Activated T-helper 2 cell treated with anti-CD3 and anti-CD28 coated beads, Interferon-gamma antibody, Interleukin-2, Interleukin-4, amounts not matched to agents 10 μg/mL and 5 μg/mL and 100 μg/mL, durations not matched to agents 14 hours and 24 hours and 36 hours (primary cell): ENCODE measurements at regions of chr1 and their contacts with region 1.

Region 1: GRCh38 chr1:68120136-68120791 is 69.8 kb upstream of the DIRAS3 start:
- DNase-seq: peak; percentile 12
- H3K4me3 Mint-ChIP-seq: no peak overlapping the region
- H3K27ac Mint-ChIP-seq: no peak overlapping the region
- H3K4me1 Mint-ChIP-seq: peaks cover 3% of the 10 kb centered on the region
- H3K27me3 Mint-ChIP-seq: no peaks in the 10 kb centered on the region

Region 2: DNA sequence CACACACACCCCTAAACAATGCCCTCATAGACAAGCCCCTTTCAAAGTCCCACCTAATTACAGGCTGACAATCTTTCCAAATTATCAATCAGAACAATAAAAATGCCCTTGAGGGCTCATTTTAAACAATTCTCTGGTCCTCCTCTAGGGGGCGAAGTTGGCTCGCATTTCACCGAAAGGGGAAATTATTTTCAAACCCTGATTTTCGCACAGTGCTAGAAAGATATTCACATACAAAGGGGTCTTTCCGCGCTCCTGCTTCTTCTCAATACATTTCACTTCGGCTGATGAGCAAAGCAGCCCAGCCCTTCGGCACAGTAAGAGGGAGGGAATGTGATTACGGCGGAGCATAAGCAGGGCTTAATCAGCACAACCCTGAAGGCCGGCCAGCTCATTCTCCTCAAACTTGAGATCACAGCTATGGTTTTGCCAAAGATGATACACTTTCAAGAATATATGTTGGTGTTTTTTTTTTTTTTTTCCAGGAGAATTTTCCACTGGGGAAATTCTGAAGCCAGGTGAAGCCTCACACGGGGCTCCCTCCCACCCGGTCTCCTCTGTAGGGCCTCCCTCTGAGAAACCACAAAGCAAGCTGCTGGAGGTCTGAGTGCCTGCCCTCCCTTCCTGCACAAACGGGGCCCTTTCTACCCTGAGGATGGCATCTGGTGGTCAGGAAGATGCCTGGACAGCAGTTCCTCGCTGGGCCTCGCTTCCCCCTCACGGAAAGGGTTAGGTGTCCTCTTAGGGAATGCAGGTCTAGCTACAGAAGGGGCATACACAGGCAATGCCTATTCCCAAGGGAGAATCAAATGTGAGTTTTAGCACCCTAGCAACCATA is 353.9 kb before region 1 on chr1:
- intact Hi-C with region 1: loop called (anchors 2 kb)
- DNase-seq: no peak
- H3K4me3 Mint-ChIP-seq: no peak overlapping the region
- H3K27ac Mint-ChIP-seq: no peak overlapping the region
- H3K4me1 Mint-ChIP-seq: peaks cover 25% of the 10 kb centered on the region
- H3K27me3 Mint-ChIP-seq: peaks cover 26% of the 10 kb centered on the region

Region 3: DNA sequence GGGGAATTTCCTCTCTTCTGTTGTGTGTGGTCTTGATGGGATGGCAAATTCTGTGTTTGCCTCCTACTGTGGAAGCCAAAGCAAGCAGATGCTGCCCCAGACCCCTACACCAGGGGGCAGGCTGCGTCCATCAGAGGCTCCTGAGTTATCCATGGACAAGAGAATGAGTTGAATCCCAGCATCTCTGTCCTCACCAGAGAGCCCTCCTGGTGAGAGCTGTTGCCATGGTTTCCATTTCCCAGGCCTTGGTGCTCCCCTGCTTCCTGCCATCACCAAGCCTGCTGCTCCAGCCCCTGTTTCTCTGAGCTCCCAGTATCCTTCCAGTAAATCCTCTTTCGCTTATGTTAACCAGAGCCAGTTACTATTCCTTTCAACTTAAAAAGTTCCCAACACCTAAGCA is 266.6 kb before region 1 on chr1:
- intact Hi-C with region 1: loop called (anchors 5 kb)
- DNase-seq: no peak
- H3K4me3 Mint-ChIP-seq: no peak overlapping the region
- H3K27ac Mint-ChIP-seq: no peak overlapping the region
- H3K4me1 Mint-ChIP-seq: no peaks in the 10 kb centered on the region
- H3K27me3 Mint-ChIP-seq: peaks cover 10% of the 10 kb centered on the region

Region 4: GRCh38 chr1:68000191-68000590 is 120.1 kb before region 1 on chr1:
- intact Hi-C with region 1: no loop called
- DNase-seq: no peak
- H3K4me3 Mint-ChIP-seq: no peak overlapping the region
- H3K27ac Mint-ChIP-seq: no peak overlapping the region
- H3K4me1 Mint-ChIP-seq: no peaks in the 10 kb centered on the region
- H3K27me3 Mint-ChIP-seq: no peaks in the 10 kb centered on the region

Region 5: GRCh38 chr1:68346188-68346808 is 226.0 kb after region 1 on chr1:
- intact Hi-C with region 1: loop called (anchors 1 kb)
- DNase-seq: no peak
- H3K4me3 Mint-ChIP-seq: no peak overlapping the region
- H3K27ac Mint-ChIP-seq: no peak overlapping the region
- H3K4me1 Mint-ChIP-seq: no peaks in the 10 kb centered on the region
- H3K27me3 Mint-ChIP-seq: no peaks in the 10 kb centered on the region

Region 6: GRCh38 chr1:68442822-68443556 is 322.7 kb after region 1 on chr1:
- intact Hi-C with region 1: loop called (anchors 2 kb)
- DNase-seq: no peak
- H3K4me3 Mint-ChIP-seq: no peak overlapping the region
- H3K27ac Mint-ChIP-seq: no peak overlapping the region
- H3K4me1 Mint-ChIP-seq: peaks cover 2% of the 10 kb centered on the region
- H3K27me3 Mint-ChIP-seq: no peaks in the 10 kb centered on the region

Region 7: DNA sequence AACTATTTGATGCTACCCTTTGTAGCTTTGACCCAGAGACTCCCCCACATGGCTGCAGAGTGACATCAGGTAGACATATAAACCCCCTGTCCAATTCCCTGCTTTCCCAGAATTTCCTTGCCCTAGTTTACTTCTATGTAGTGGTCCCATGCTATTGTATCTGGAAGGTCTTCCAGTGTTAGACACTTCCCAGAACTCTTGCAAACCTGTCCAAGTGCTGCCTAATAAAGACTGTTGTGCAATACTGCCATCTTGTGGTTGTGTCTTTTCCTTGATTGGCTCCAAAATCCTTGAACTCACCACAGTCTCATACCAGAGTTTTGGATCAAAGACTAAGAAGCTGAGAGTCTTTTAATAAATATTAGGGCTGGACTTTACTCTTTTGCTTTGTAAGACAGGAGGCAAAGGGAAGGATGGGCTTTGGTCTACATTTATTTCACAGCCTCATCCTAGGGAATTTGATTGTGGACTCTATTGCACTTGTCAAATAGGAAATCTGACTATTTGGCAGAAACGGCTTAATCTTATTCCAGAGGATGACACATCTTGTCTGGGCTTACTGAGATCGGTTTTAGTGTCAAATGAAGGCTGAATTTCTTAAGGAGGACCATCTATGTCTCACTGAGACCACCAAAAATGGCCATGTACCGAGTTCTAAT is 1617.4 kb after region 1 on chr1:
- intact Hi-C with region 1: loop called (anchors 2 kb)
- DNase-seq: no peak
- H3K4me3 Mint-ChIP-seq: no peak overlapping the region
- H3K27ac Mint-ChIP-seq: no peak overlapping the region
- H3K4me1 Mint-ChIP-seq: no peaks in the 10 kb centered on the region
- H3K27me3 Mint-ChIP-seq: no peaks in the 10 kb centered on the region